Activated naive CD4-positive, alpha-beta T cell treated with anti-CD3 and anti-CD28 coated beads for 36 hours (primary cell): ENCODE measurements at regions of chr18 and their contacts with region 1.

Region 1: DNA sequence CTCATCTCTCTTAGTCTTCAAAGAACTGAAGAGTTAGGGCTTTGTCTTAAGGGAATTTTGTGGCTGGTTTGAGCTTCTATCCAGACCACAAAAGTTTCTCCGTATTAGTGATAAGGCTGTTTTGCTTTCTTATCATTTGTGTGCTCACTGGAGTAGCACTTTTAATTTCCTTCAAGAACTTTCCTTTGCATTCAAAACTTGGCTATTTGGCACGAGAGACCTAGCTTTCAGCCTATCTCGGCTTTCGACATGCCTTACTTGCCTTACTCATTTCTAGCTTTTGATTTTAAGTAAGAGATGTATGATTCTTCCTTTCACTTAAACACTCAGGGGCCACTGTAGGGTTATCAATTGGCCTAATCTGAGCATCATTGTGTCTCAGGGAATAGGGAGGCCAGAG is 29.9 kb downstream of the HDHD2 start:
- DNase-seq: peak; percentile 34
- H3K4me3 Mint-ChIP-seq: no peak overlapping the region
- H3K27ac Mint-ChIP-seq: peak overlapping the region; percentile 2
- H3K4me1 Mint-ChIP-seq: peaks cover 27% of the 10 kb centered on the region
- H3K27me3 Mint-ChIP-seq: no peaks in the 10 kb centered on the region

Region 2: DNA sequence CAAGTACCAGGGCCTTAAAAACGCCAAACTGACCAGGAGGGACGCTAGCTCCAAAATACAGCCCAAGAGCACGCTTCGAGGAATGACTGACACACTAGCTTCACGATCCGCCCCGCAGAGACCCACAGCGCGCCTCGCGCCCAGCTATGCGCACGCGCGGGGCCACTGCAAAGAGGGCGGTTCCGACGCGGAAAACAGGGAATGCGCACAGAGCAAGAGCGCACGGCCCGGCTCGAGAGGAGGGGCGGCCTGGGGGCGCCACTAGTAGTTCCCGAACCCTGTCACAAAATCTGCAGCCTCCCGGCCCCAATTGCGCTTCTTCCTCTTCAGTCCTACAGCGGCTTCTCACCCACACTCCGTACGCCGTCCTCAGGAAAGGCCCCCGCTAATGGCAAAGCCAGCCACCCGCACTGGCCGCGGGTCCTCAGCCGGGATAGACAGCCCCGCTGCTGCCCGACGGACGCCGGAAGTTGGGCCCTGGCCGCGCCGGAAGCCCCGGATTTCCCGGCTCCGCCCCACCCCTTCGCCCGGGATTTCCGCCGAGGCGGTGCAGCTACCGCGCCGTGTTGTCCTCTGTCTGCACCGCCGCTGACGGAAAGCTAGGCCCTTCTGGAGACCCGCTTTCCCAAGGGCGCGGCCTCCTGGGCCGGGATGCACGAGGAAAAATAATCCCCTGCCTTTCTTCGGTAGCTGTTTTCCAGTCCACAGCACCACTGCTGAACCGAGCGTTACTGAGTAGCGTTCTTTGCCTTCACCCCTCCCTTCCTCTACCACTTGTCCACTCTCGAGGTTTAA is 29.8 kb after region 1 on chr18 and contains the start of gene HDHD2:
- CTCF ChIA-PET with region 1: interaction called, 5 read pairs
- intact Hi-C with region 1: loop called (anchors 1 kb)
- DNase-seq: peak; percentile 83
- H3K4me3 Mint-ChIP-seq: peak within 1 kb of the TSS; percentile 95
- H3K27ac Mint-ChIP-seq: peak within 1 kb of the TSS; percentile 96
- H3K4me1 Mint-ChIP-seq: peaks cover 35% of the 10 kb centered on the region
- H3K27me3 Mint-ChIP-seq: no peaks in the 10 kb centered on the region
- total RNA-seq, gene HDHD2: 32.8 to 33.9 TPM

Region 3: DNA sequence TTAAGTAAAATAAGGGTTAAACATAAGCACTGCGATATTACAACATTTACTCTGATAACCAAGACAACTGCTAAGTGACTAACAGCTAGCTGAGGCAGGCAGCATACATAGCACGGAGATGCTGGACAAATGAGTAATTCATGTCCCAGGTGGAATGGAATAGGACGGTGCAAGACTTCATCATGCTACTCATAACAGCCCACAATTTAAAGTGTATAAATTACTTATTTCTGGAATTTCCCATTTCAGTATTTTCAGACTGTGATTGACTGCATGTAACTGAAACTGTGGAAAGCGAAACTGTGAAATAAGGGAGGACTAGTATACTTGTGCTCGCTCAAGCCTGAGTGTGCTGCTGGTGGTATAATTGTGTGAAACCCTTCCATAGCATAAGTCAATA is 42.8 kb after region 1 on chr18:
- CTCF ChIA-PET with region 1: no interaction called
- intact Hi-C with region 1: loop called (anchors 1 kb)
- DNase-seq: no peak
- H3K4me3 Mint-ChIP-seq: no peak overlapping the region
- H3K27ac Mint-ChIP-seq: no peak overlapping the region
- H3K4me1 Mint-ChIP-seq: peaks cover 28% of the 10 kb centered on the region
- H3K27me3 Mint-ChIP-seq: no peaks in the 10 kb centered on the region

Region 4: DNA sequence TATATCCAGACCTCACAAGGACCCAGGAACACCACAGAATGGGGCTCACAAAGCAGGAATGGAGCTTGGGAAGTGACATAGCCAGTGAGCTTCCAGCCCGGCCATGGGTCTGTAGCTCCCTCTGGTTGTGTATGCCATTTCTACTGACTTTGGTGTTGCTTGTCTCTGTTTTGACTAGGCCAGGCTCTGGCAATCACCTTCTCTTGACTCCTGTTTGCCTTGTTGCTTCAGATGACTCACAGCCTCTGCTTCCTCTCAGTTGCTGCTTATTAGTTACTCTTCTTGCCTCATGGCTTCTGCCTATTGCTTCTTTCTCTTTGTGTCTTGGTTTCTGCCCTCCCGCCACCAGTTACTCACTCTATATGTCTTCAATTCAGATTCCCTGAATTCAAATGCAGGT is 71.5 kb after region 1 on chr18:
- CTCF ChIA-PET with region 1: no interaction called
- intact Hi-C with region 1: loop called (anchors 5 kb)
- DNase-seq: peak; percentile 21
- H3K4me3 Mint-ChIP-seq: no peak overlapping the region
- H3K27ac Mint-ChIP-seq: no peak overlapping the region
- H3K4me1 Mint-ChIP-seq: peaks cover 2% of the 10 kb centered on the region
- H3K27me3 Mint-ChIP-seq: peaks cover 15% of the 10 kb centered on the region